Uterus (tissue), 4 donors: ENCODE measurements at regions of chr3 and their contacts with region 1.

Region 1: DNA sequence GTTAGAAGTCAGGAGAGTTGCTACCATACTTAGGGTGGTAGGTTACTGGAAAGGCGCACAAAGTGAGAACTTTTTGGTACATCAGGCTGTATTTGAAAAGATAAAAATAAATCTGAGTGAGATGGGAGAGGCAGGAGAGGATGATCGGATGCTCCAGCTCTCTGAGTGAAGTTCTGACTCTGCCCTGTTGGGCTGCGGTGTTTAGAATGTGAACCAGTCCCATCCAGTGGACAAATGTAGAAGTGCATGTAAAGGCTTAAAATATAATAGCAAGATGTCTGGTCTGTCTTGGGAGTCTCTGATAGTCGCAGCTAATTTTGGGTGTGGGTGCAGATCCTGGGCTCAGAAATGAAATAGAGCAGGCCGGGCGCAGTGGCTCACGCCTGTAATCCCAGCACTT is 30.4 kb downstream of the ACKR2 start:
- DNase-seq: peak in 1 of 2 donors; percentile 52
- H3K4me3 ChIP-seq: no peak overlapping the region
- H3K27ac ChIP-seq: no peak overlapping the region
- H3K4me1 ChIP-seq: no peaks in the 10 kb centered on the region
- H3K27me3 ChIP-seq: no peaks in the 10 kb centered on the region
- CTCF ChIP-seq: peak; percentile 62 to 91 (median 82)
- POLR2A ChIP-seq: no peak

Region 2: GRCh38 chr3:42780892-42781700 is 58.5 kb before region 1 on chr3:
- intact Hi-C with region 1: loop called (anchors 10 kb)
- DNase-seq: peak in 1 of 2 donors; percentile 63
- H3K4me3 ChIP-seq: no peak overlapping the region
- H3K27ac ChIP-seq: no peak overlapping the region
- H3K4me1 ChIP-seq: no peaks in the 10 kb centered on the region
- H3K27me3 ChIP-seq: no peaks in the 10 kb centered on the region
- CTCF ChIP-seq: peak; percentile 74 to 88 (median 82)
- POLR2A ChIP-seq: no peak

Region 3: GRCh38 chr3:42852441-42852840 is 12.8 kb after region 1 on chr3:
- intact Hi-C with region 1: no loop called
- DNase-seq: no peak
- H3K4me3 ChIP-seq: no peak overlapping the region
- H3K27ac ChIP-seq: peak overlapping the region in 1 of 2 donors; percentile 27
- H3K4me1 ChIP-seq: no peaks in the 10 kb centered on the region
- H3K27me3 ChIP-seq: no peaks in the 10 kb centered on the region
- CTCF ChIP-seq: no peak
- POLR2A ChIP-seq: no peak

Region 4: GRCh38 chr3:43105596-43106292 is 266.1 kb after region 1 on chr3 and contains the start of gene POMGNT2:
- intact Hi-C with region 1: no loop called
- DNase-seq: peak; percentile 89
- H3K4me3 ChIP-seq: peak within 1 kb of the TSS; percentile 83 to 92
- H3K27ac ChIP-seq: peak within 1 kb of the TSS; percentile 96
- H3K4me1 ChIP-seq: peaks cover 0 to 3% of the 10 kb centered on the region in 2 donors
- H3K27me3 ChIP-seq: no peaks in the 10 kb centered on the region
- CTCF ChIP-seq: peak in 2 of 4 experiments; percentile 6 to 17
- POLR2A ChIP-seq: peak; percentile 71 to 93
- total RNA-seq, gene POMGNT2: 17.6 to 103 (median 57.7) TPM